ENCODE measurements at regions of chr17 and their contacts with region 1.

Region 1: GRCh38 chr17:8383143-8383822 is at the start of gene RPL26:
- DNase-seq: peak; percentile 98
- H3K4me3 Mint-ChIP-seq: peak within 1 kb of the TSS; percentile 99
- H3K27ac Mint-ChIP-seq: peak within 1 kb of the TSS; percentile 98
- H3K4me1 Mint-ChIP-seq: peaks cover 57% of the 10 kb centered on the region
- H3K27me3 Mint-ChIP-seq: no peaks in the 10 kb centered on the region
- total RNA-seq, gene RPL26: 3,652 to 3,827 TPM

Region 2: GRCh38 chr17:7931709-7932482 is 451.4 kb before region 1 on chr17 and contains the starts of genes CNTROB and TRAPPC1:
- CTCF ChIA-PET with region 1: no interaction called
- intact Hi-C with region 1: loop called (anchors 5 kb)
- DNase-seq: peak; percentile 100
- H3K4me3 Mint-ChIP-seq: peak within 1 kb of the TSS; percentile 91
- H3K27ac Mint-ChIP-seq: peak within 1 kb of the TSS; percentile 87
- H3K4me1 Mint-ChIP-seq: peaks cover 38% of the 10 kb centered on the region
- H3K27me3 Mint-ChIP-seq: no peaks in the 10 kb centered on the region
- total RNA-seq, gene CNTROB: 49.3 to 56.3 TPM
- total RNA-seq, gene TRAPPC1: 162 to 172 TPM

Region 3: GRCh38 chr17:8222630-8223356 is 160.5 kb before region 1 on chr17:
- CTCF ChIA-PET with region 1: interaction called, 3 read pairs
- intact Hi-C with region 1: loop called (anchors 2 kb)
- DNase-seq: peak; percentile 94
- H3K4me3 Mint-ChIP-seq: peak overlapping the region; percentile 96
- H3K27ac Mint-ChIP-seq: peak overlapping the region; percentile 96
- H3K4me1 Mint-ChIP-seq: peaks cover 37% of the 10 kb centered on the region
- H3K27me3 Mint-ChIP-seq: peaks cover 15% of the 10 kb centered on the region

Region 4: GRCh38 chr17:8294814-8295316 is 88.4 kb before region 1 on chr17:
- CTCF ChIA-PET with region 1: no interaction called
- intact Hi-C with region 1: loop called (anchors 2 kb)
- DNase-seq: no peak
- H3K4me3 Mint-ChIP-seq: peak overlapping the region; percentile 85
- H3K27ac Mint-ChIP-seq: peak overlapping the region; percentile 77
- H3K4me1 Mint-ChIP-seq: peaks cover 19% of the 10 kb centered on the region
- H3K27me3 Mint-ChIP-seq: no peaks in the 10 kb centered on the region

Region 5: DNA sequence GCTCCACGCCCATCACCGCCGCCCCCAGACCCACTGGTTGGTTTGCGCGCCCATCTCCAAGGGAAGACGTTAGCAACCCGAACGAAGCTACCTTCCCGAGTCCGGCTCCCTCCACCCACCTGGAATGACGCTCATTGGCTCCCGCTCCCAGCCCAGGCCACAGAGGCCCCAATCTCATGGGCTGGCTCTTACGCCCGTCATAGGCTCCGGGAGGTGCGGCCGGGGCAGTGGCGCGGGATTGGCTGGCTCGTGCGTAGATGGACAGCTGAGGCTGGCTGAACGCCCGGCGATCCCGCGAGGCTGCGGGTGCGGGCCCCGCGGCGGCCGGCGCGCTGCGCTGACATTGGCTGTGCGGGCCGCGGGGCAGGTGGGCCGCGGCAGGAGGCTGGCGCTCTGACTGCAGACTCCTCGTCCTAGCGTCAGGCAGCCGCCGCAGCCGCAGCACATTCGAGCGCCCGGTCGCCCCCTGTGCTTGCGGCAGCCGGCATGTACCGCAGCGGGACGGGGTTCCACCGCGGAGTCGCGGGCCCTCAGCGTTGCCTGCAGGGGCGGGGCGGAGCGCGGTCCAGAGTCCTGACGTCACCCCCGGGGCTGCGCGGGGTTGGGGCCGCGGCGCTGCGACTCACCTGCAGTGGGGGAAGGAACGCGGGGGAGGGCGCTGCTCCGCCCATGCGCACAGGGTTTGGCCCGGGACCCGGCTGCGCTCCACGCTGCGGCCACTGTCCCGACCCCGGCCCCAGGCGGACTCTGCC is 247.7 kb after region 1 on chr17:
- CTCF ChIA-PET with region 1: no interaction called
- intact Hi-C with region 1: loop called (anchors 1 kb)
- DNase-seq: peak; percentile 97
- H3K4me3 Mint-ChIP-seq: peak overlapping the region; percentile 94
- H3K27ac Mint-ChIP-seq: no peak overlapping the region
- H3K4me1 Mint-ChIP-seq: peaks cover 4% of the 10 kb centered on the region
- H3K27me3 Mint-ChIP-seq: peaks cover 40% of the 10 kb centered on the region

Region 6: DNA sequence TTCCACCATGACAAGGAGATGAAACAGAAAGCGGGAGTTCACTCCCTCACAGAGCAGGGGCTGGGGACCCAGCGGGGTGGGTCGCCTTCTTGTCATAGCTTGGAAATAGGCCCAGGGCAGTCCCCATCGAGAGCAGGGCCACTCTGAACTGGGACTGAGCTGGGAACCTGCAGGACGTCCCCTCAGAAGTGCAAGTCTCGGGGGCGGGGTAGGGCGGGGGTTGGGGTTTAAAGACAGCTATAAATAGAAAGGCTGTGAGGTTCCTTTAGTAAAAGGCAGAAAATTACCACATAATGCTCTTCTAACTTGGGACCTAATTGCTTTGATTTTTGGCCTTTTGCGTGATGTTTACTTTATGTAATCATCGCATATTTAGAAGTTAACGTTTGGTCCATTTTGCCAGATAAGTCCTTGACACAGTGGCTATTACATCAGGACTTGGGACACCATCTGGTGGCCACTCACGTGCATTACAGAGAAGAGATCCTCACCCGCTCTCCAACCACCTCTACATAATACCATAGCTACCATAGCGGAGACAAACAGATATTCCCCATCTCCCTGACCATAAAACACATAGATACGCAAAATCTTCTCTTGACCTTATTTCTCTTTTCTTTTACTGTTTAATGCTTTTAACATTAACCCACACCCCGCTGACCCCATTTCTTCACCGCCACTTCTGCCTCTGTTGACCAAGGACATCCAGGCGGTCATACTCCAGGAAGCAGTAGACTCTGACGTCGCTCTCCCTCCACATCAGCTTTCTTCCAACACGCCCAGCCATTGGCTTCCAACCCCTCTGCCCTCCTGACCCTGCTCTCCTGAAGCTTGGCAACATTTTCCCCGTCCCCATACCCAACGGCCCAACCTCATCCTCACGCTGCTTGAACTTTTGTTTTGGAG is 511.6 kb after region 1 on chr17:
- CTCF ChIA-PET with region 1: no interaction called
- intact Hi-C with region 1: loop called (anchors 5 kb)
- DNase-seq: peak; percentile 69
- H3K4me3 Mint-ChIP-seq: no peak overlapping the region
- H3K27ac Mint-ChIP-seq: no peak overlapping the region
- H3K4me1 Mint-ChIP-seq: peaks cover 64% of the 10 kb centered on the region
- H3K27me3 Mint-ChIP-seq: no peaks in the 10 kb centered on the region

Measured in activated naive CD4-positive, alpha-beta T cell treated with anti-CD3 and anti-CD28 coated beads for 36 hours (primary cell).